AG04450 (cell line): ENCODE measurements at regions of chr19 and their contacts with region 1.

Region 1: DNA sequence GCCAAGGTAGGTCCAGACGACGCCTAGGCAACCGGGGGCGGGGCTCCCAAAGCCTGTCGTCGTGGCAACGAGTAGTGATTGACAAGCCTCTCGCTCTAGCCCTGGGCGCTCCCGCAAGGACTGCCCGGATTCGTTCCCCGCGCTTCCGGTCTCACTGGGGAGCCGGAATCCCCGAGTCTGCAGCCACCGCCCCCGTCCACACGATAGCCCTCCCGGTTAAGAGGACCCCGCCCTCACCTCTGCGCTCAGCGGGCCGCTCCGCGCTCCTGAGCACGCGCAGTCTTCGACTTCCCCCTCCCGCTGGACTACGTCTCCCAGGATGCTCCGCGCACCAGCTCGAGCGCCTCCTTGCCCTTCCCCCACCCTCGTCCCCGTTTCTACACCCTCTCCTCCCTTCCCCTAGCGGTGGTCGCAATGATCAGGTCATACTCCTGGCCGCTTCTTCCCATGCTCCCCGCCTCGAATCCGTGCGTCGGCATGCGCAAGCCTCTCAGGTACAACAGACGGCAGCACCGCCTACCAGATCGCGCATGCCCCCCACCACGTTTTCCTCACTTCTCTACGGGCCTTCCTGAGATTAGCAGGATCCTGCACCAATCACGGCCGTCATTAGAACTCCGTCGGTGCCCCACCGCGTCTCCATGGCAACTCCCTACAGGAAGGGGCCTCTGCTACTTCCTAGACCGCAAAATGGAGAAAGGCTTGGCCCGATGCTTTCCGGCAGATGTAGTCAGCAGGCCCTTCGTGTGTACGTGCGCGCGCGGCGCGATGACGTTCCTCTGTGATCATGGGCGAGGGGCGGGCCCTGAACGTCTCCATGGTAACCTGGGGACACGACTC is at the start of gene MZF1:
- DNase-seq: peak; percentile 100
- H3K4me3 ChIP-seq: peak within 1 kb of the TSS; percentile 96
- H3K27ac ChIP-seq: peak within 1 kb of the TSS; percentile 94
- H3K27me3 ChIP-seq: no peaks in the 10 kb centered on the region
- CTCF ChIP-seq: 0 out of 2 replicates have a peak, but pooled peaks have one; percentile 25
- polyA plus RNA-seq, gene MZF1: 5.5 and 6.2 TPM in 2 replicates

Region 2: DNA sequence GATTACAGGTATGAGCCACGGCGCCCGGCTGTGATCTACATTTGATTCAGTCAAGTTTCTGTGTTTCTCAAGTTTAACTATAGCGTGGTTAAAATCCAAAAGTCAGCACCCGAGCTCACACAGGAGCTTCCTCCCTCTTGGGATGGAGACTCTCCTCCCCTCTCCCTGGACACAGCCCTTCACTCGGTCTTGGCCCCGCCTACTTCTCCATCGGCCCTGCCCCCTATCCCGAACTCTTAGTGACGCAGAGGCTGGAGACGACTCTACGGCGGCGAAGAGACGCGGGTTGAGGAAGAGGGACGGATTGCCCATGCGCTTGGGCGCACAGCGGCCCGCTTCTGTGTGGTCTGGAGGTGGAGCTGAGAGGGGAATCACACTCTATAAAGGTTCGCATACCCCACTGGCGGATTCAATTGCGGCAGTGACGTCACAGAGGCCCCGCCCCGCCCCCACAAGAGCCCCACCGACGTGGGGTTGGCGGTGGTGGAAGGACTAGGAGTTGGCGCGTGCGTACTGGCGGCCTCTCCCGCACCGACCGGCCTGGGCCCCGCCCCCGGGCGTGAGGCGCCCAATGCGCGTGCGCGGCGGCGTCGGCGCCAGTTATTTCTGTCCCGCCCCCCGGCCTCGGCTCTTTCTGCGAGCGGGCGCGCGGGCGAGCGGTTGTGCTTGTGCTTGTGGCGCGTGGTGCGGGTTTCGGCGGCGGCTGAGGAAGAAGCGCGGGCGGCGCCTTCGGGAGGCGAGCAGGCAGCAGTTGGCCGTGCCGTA is 29.0 kb before region 1 on chr19 and contains the start of gene TRIM28:
- CTCF ChIA-PET with region 1: interaction called, 3 read pairs
- POLR2A ChIA-PET with region 1: interaction called, 10 read pairs
- DNase-seq: peak; percentile 99
- H3K4me3 ChIP-seq: peak within 1 kb of the TSS; percentile 84
- H3K27ac ChIP-seq: peak within 1 kb of the TSS; percentile 97
- H3K27me3 ChIP-seq: peaks cover 6% of the 10 kb centered on the region
- CTCF ChIP-seq: no peak
- polyA plus RNA-seq, gene TRIM28: 313 and 413 TPM in 2 replicates

Region 3: DNA sequence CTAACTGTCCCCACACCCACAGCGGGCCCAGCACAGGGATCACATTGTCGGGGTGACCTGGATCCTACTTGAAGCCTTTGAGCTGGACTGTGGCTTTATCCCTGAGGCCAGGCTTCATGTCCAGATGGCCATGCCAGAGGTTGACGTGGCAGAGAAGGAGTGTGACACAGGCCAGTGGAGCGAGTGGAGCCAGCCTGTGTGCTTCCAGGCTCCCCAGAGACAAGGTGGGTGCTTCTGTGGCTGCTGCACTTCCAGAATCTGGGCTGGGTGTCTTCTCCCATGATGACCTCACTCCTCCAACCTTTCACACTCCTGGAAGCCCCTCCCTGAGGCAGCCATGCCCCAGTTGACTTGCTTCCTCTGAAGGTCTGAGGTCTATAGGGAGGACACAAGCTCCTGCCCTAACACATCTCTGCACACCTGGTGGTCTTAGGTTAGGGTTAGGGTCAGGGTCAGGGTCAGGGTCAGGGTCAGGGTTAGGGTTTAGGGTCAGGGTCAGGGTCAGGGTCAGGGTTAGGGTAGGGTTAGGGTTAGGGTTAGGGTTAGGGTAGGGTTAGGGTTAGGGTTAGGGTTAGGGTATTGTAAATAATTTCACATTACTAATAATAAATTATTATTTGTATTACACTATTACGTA is 13.2 kb after region 1 on chr19:
- CTCF ChIA-PET with region 1: no interaction called
- POLR2A ChIA-PET with region 1: no interaction called
- DNase-seq: no peak
- H3K4me3 ChIP-seq: no peak overlapping the region
- H3K27ac ChIP-seq: peak overlapping the region; percentile 47
- H3K27me3 ChIP-seq: no peaks in the 10 kb centered on the region
- CTCF ChIP-seq: no peak